CD14-positive monocyte (primary cell): ENCODE measurements at regions of chr17 and their contacts with region 1.

Region 1: DNA sequence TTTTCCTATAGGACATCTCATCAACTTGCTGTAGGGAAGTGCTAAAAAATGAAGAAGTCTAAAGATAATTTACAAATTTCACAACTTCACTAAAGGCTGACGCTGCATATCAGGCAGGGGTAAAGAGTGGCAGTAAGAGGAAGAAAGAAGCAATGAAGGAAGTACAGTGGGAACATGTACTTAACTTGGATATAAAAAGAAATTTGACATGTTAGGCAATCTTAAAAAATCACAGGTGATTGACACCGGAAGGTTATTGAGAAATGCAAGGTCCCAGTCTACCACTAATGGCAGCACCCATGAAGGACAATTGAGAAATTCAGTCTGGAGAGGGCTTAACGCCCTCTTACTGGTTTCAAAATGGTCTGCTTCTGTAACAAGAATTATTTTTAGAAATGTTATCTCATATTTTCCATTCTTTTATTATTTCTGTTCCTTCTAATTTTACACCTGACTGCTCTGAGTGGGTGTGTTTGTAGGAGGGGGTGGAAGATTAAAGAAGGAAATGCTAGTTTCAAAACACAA is 358.1 kb downstream of the KCNJ2 start:
- DNase-seq: peak; percentile 59 to 85 (median 81)
- H3K4me3 ChIP-seq: peak overlapping the region in 1 of 3 experiments; percentile 60
- H3K4me3 Mint-ChIP-seq: peak overlapping the region in 1 of 2 donors; percentile 55
- H3K27ac ChIP-seq: peak overlapping the region in 1 of 2 donors; percentile 63
- H3K27ac Mint-ChIP-seq: peak overlapping the region; percentile 67 to 91 (median 86)
- H3K4me1 ChIP-seq: peaks cover 22 to 29% of the 10 kb centered on the region in 2 donors
- H3K4me1 Mint-ChIP-seq: peaks cover 28% of the 10 kb centered on the region
- H3K27me3 ChIP-seq: no peaks in the 10 kb centered on the region
- H3K27me3 Mint-ChIP-seq: peaks cover 0 to 4% (median 0%) of the 10 kb centered on the region in 3 donors
- CTCF ChIP-seq: no peak

Region 2: GRCh38 chr17:70288540-70289290 is 238.7 kb before region 1 on chr17:
- intact Hi-C with region 1: loop called in 1 of 2 experiments (anchors 5 kb)
- DNase-seq: peak; percentile 88 to 98 (median 96)
- H3K4me3 ChIP-seq: peak overlapping the region in 1 of 3 experiments; percentile 46
- H3K4me3 Mint-ChIP-seq: peak overlapping the region in 1 of 2 donors; percentile 30
- H3K27ac ChIP-seq: peak overlapping the region in 1 of 2 donors; percentile 78
- H3K27ac Mint-ChIP-seq: peak overlapping the region; percentile 75 to 95 (median 91)
- H3K4me1 ChIP-seq: peaks cover 32 to 48% of the 10 kb centered on the region in 2 donors
- H3K4me1 Mint-ChIP-seq: peaks cover 42% of the 10 kb centered on the region
- H3K27me3 ChIP-seq: no peaks in the 10 kb centered on the region
- H3K27me3 Mint-ChIP-seq: peaks cover 0 to 2% (median 0%) of the 10 kb centered on the region in 3 donors
- CTCF ChIP-seq: no peak

Region 3: DNA sequence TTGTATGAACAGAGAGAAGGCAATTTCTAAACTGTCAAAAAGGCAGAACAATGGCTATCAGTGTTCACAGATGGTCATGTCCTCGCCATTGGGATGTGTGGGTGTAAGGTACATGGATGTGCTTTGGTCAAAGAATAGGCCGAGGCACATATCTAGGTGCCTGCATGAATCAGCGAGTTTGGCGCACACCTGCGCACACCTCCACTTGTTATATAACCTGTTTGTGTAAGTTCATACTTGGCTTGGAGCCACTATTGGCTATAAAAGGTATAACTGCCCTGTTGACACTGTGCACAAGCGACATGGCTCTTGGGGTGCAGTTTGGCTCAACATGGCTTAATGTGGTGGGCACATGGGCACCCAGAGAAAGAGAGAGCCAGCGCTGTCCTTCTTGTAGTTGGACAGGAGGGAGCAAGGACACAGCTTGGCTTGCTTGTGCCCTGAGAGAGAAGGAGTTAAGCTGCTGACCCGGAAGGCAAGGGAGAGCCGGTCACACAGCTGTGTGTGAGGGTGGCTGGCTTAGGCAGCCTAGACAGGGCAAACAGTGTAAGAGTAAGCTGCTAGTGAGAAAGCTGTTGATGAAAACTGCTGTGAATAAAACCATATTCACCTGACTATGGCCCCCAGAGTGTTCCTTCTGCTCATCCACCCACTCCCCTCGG is 141.0 kb after region 1 on chr17:
- intact Hi-C with region 1: no loop called
- DNase-seq: no peak
- H3K4me3 ChIP-seq: no peak overlapping the region
- H3K4me3 Mint-ChIP-seq: no peak overlapping the region
- H3K27ac ChIP-seq: no peak overlapping the region
- H3K27ac Mint-ChIP-seq: peak overlapping the region in 1 of 7 donors; percentile 63
- H3K4me1 ChIP-seq: no peaks in the 10 kb centered on the region
- H3K4me1 Mint-ChIP-seq: no peaks in the 10 kb centered on the region
- H3K27me3 ChIP-seq: no peaks in the 10 kb centered on the region
- H3K27me3 Mint-ChIP-seq: peaks cover 0 to 2% (median 0%) of the 10 kb centered on the region in 3 donors
- CTCF ChIP-seq: no peak

Region 4: DNA sequence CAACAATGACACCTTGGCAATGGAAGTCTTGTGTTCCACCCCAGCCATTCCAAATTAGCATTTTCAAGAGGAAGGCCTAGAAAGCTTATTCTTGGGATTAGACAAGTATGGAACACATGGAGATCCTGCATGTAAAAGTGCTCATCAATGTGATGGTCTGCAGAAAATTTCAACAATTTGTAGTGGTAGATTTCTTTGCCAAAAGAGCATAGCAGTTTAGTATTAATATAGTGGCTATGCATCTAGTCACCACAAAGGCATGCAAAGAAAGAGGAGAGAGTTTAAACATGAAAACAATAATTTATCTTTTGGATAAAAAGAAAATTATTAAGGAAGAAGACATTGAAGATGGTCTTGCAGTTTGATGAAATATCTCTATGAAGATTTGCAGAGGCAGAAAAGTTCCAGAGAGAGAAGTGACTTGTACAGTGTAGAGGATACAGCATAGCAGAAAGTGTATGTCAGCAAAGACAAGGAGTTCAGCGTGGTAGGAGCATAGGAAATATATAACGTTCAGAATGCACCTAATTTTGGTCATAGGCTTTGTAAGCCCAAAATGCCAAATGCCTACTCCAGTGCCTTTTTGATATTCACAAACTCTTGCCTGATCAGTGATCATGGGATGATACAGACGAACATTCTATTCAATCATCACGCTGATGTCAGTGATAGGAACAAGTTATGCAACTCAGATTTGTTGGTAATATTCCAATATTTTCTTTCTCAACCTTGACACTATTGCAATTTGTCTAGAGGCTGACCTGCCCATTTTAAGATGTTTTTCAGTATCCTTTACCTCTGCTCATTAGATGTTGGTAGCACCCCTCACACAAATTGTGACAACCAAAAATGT is 865.5 kb after region 1 on chr17:
- intact Hi-C with region 1: no loop called
- DNase-seq: no peak
- H3K4me3 ChIP-seq: no peak overlapping the region
- H3K4me3 Mint-ChIP-seq: no peak overlapping the region
- H3K27ac ChIP-seq: no peak overlapping the region
- H3K27ac Mint-ChIP-seq: no peak overlapping the region
- H3K4me1 ChIP-seq: no peaks in the 10 kb centered on the region
- H3K4me1 Mint-ChIP-seq: no peaks in the 10 kb centered on the region
- H3K27me3 ChIP-seq: no peaks in the 10 kb centered on the region
- H3K27me3 Mint-ChIP-seq: no peaks in the 10 kb centered on the region
- CTCF ChIP-seq: no peak